Sigmoid colon (tissue), 7 donors: ENCODE measurements at regions of chr1 and their contacts with region 1.

Region 1: GRCh38 chr1:222643938-222644635 is 26.2 kb downstream of the MIA3 start:
- DNase-seq: peak; percentile 98
- H3K4me3 ChIP-seq: peak overlapping the region; percentile 68 to 92 (median 81)
- H3K27ac ChIP-seq: peak overlapping the region; percentile 92 to 95 (median 94)
- H3K4me1 ChIP-seq: peaks cover 0 to 18% (median 7%) of the 10 kb centered on the region in 4 donors
- H3K27me3 ChIP-seq: no peaks in the 10 kb centered on the region
- CTCF ChIP-seq: no peak
- EP300 ChIP-seq: peak in 1 of 4 donors; percentile 76
- POLR2A ChIP-seq: peak; percentile 63 to 77

Region 2: DNA sequence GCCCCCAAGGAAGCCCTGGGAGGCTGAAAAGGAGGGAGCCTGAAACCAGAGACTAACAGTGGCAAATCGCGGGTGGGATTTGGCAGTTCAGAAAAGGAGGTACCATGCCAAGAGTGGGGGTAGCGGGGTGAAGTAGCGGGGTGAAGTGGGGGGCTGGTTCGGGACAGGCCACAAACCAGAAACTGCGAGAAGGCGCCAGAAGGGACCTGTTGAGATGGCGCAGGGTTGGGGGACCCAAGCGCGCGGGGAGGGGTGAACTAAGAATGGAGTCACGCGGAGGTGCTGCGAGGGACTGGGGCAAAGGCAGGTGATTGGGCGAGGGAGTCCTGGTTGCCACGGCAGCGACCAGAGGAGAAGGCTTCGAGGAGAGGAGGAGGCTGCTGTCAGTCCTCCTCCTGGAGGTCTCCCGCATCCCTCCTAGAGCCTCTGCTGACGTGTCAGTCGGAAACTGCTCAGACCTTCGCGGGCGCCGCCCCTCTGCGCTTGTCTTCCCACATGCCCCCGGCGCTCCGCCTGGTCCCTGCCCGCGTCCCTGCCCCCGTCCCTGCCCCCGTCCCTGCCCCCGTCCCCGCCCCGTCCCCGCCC is 26.6 kb before region 1 on chr1:
- intact Hi-C with region 1: no loop called
- DNase-seq: peak; percentile 98
- H3K4me3 ChIP-seq: peak overlapping the region; percentile 35 to 100 (median 98)
- H3K27ac ChIP-seq: peak overlapping the region; percentile 73 to 83 (median 80)
- H3K4me1 ChIP-seq: peaks cover 0 to 20% (median 15%) of the 10 kb centered on the region in 4 donors
- H3K27me3 ChIP-seq: no peaks in the 10 kb centered on the region
- CTCF ChIP-seq: no peak
- EP300 ChIP-seq: no peak
- POLR2A ChIP-seq: peak; percentile 11 to 21

Region 3: DNA sequence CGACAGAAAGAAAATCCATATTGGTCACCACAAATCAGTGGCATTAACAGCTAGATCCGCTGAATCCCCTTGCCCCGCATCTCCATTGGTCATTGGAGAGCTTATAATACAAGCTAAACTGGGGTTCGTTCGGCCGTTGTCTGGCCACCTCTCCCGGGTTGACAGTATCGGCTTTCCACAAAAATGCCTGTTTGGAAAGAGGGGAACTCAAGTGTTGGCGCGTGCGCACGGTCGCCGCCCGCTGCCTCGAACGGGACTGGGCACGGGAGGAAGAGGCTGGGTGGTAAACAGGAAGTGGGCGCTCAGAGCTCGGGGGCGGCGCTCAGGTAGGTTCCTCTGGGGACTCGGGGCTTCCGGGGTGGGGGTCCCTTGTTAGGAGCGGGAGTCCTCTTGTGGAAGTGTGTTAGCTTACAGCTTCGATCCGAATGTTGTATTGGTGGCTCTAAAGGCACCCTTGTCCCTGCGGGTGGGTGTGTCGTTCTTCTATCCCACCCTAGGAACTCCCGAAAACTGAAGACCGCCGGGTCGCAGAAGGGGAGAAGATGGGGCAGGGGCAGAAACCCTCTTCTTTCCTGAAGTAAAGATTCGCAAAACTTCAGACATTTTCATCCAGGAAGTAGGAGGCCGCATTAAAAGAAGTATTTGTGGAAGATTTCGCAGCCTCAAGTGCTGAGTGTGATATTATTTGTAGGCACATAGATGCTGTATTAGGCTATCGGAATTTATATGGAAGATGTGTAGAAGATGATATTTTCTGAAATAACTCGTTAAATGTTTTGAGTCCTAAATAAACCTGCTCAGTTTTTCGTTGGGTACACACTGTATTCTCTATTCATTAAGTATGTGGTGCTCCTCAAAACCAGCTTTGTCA is 69.2 kb after region 1 on chr1:
- intact Hi-C with region 1: loop called (anchors 2 kb)
- DNase-seq: peak; percentile 97
- H3K4me3 ChIP-seq: peak overlapping the region; percentile 60 to 88 (median 69)
- H3K27ac ChIP-seq: peak overlapping the region; percentile 88 to 98 (median 92)
- H3K4me1 ChIP-seq: peaks cover 0 to 42% (median 28%) of the 10 kb centered on the region in 4 donors
- H3K27me3 ChIP-seq: no peaks in the 10 kb centered on the region
- CTCF ChIP-seq: no peak
- EP300 ChIP-seq: no peak
- POLR2A ChIP-seq: no peak